Natural killer cell (primary cell): ENCODE measurements at regions of chr11 and their contacts with region 1.

Region 1: GRCh38 chr11:113113801-113114706 is 152.8 kb downstream of the NCAM1 start:
- DNase-seq: peak; percentile 21 to 31
- ATAC-seq: peak; percentile 65 to 92 (median 67)
- H3K4me3 ChIP-seq: no peak overlapping the region
- H3K4me3 Mint-ChIP-seq: no peak overlapping the region
- H3K27ac ChIP-seq: no peak overlapping the region
- H3K27ac Mint-ChIP-seq: no peak overlapping the region
- H3K4me1 ChIP-seq: no peaks in the 10 kb centered on the region
- H3K4me1 Mint-ChIP-seq: peaks cover 9 to 12% of the 10 kb centered on the region in 2 donors
- H3K27me3 ChIP-seq: no peaks in the 10 kb centered on the region
- H3K27me3 Mint-ChIP-seq: no peaks in the 10 kb centered on the region
- CTCF ChIP-seq: peak; percentile 63

Region 2: DNA sequence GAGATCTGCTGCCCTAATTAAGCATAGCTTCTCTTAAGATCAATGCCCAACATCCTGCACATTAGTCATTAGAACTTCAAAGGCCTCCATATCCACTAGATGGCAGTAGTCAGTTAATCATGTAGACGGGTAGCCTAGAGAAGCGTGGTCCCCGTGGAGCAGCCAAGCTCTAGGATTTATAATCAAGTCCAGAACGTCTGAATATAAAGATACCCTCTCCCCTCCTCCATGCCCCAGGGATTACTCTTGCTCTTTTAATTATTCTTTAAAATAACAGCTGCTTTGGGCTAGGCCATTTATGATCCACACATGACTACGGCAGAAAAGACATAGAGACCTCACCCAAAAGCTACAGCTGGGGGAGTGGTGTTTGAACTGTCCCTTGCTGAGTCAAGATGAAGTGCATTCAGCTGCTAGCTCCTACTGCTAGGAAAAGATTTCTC is 525.8 kb before region 1 on chr11:
- intact Hi-C with region 1: loop called (anchors 1 kb)
- DNase-seq: peak in 1 of 2 donors; percentile 72
- ATAC-seq: peak; percentile 61 to 93 (median 68)
- H3K4me3 ChIP-seq: no peak overlapping the region
- H3K4me3 Mint-ChIP-seq: no peak overlapping the region
- H3K27ac ChIP-seq: no peak overlapping the region
- H3K27ac Mint-ChIP-seq: no peak overlapping the region
- H3K4me1 ChIP-seq: no peaks in the 10 kb centered on the region
- H3K4me1 Mint-ChIP-seq: no peaks in the 10 kb centered on the region
- H3K27me3 ChIP-seq: no peaks in the 10 kb centered on the region
- H3K27me3 Mint-ChIP-seq: peaks cover 9% of the 10 kb centered on the region in 2 donors
- CTCF ChIP-seq: peak; percentile 78

Region 3: DNA sequence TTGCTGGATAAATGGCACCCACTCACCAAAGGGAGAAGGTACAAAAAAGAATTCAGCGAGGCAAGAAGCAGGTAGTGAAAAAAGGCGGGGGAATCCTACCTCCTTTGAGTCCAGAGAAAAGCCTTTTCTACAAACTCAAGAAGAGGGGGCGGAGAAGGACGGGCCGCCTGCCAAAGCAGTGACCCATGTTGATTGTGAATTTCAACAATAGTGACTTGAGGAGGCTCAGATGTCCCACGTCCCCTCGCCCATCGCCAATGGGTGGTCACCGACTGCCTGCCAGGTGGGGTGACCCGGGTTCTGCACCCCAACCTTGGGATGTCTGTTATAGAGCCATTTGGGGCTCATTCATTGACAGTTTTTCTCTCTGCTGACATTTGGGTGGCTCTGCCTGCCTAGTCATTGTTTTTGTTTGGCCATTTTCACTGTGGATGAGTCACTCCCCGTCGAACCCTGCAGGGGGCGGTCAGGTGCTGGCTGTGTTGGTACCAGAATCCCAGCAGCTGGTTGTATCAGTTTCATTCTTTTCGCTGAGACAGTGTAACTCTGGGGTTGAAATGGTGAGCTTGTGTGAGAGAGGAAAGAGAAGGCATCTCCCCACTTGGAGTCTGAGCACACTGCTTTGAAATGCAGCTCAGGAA is 316.3 kb before region 1 on chr11:
- intact Hi-C with region 1: loop called (anchors 1 kb)
- DNase-seq: peak; percentile 39 to 61
- ATAC-seq: peak; percentile 81 to 97 (median 96)
- H3K4me3 ChIP-seq: no peak overlapping the region
- H3K4me3 Mint-ChIP-seq: peak overlapping the region; percentile 73
- H3K27ac ChIP-seq: no peak overlapping the region
- H3K27ac Mint-ChIP-seq: peak overlapping the region in 1 of 2 donors; percentile 37
- H3K4me1 ChIP-seq: peaks cover 7% of the 10 kb centered on the region
- H3K4me1 Mint-ChIP-seq: peaks cover 7 to 12% of the 10 kb centered on the region in 2 donors
- H3K27me3 ChIP-seq: no peaks in the 10 kb centered on the region
- H3K27me3 Mint-ChIP-seq: peaks cover 0 to 10% of the 10 kb centered on the region in 2 donors
- CTCF ChIP-seq: peak; percentile 80

Region 4: DNA sequence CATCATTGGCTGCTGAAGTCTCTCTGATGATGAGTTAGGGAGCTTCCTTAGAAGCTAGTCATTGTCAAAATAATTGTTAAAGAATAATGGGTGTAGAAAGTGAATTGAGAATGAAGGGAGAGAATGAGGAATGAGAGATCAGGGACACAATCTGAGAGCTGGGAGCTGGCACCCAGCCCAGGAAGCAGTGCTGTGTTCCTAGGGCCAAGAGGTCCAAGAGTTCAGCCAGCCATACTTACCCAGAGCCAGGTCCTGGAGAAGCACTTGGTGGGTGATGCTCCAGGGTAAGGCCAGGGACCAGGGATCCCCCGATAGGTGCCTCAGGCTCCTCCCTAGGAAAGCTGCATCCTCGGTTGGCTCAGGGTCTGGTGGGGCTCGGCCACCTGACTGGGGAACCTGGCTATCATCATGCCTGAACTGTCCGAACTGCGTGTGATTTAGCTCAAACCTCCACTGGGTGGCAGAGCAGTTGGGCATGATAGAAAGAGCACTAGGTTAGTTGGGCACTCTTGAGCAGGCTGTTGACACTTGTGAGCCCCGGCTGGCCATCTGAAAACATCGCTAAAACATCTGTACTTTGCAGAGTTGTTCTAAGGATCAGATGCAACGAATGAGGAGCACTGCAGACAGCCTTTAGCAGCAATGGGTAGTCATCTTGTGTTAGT is 276.8 kb before region 1 on chr11:
- intact Hi-C with region 1: loop called (anchors 2 kb)
- DNase-seq: peak; percentile 9 to 18
- ATAC-seq: peak; percentile 62 to 92 (median 68)
- H3K4me3 ChIP-seq: no peak overlapping the region
- H3K4me3 Mint-ChIP-seq: no peak overlapping the region
- H3K27ac ChIP-seq: no peak overlapping the region
- H3K27ac Mint-ChIP-seq: no peak overlapping the region
- H3K4me1 ChIP-seq: peaks cover 24% of the 10 kb centered on the region
- H3K4me1 Mint-ChIP-seq: peaks cover 16 to 20% of the 10 kb centered on the region in 2 donors
- H3K27me3 ChIP-seq: no peaks in the 10 kb centered on the region
- H3K27me3 Mint-ChIP-seq: no peaks in the 10 kb centered on the region
- CTCF ChIP-seq: peak; percentile 26

Region 5: GRCh38 chr11:113059548-113059947 is 54.5 kb before region 1 on chr11:
- intact Hi-C with region 1: no loop called
- DNase-seq: no peak
- ATAC-seq: no peak
- H3K4me3 ChIP-seq: no peak overlapping the region
- H3K4me3 Mint-ChIP-seq: no peak overlapping the region
- H3K27ac ChIP-seq: no peak overlapping the region
- H3K27ac Mint-ChIP-seq: no peak overlapping the region
- H3K4me1 ChIP-seq: no peaks in the 10 kb centered on the region
- H3K4me1 Mint-ChIP-seq: peaks cover under 1 to 13% of the 10 kb centered on the region in 2 donors
- H3K27me3 ChIP-seq: no peaks in the 10 kb centered on the region
- H3K27me3 Mint-ChIP-seq: no peaks in the 10 kb centered on the region
- CTCF ChIP-seq: no peak

Region 6: GRCh38 chr11:113077379-113077778 is 36.7 kb before region 1 on chr11:
- intact Hi-C with region 1: no loop called
- DNase-seq: no peak
- ATAC-seq: no peak
- H3K4me3 ChIP-seq: no peak overlapping the region
- H3K4me3 Mint-ChIP-seq: no peak overlapping the region
- H3K27ac ChIP-seq: no peak overlapping the region
- H3K27ac Mint-ChIP-seq: no peak overlapping the region
- H3K4me1 ChIP-seq: no peaks in the 10 kb centered on the region
- H3K4me1 Mint-ChIP-seq: peaks cover 15 to 28% of the 10 kb centered on the region in 2 donors
- H3K27me3 ChIP-seq: no peaks in the 10 kb centered on the region
- H3K27me3 Mint-ChIP-seq: no peaks in the 10 kb centered on the region
- CTCF ChIP-seq: no peak